K562 (cell line): ENCODE measurements at regions of chr10 and their contacts with region 1.

Region 1: GRCh38 chr10:59625721-59626522 is 83.7 kb downstream of the SLC16A9 start:
- DNase-seq: peak; percentile 63 to 78 (median 67)
- ATAC-seq: peak; percentile 91
- H3K4me3 ChIP-seq: no peak overlapping the region
- H3K27ac ChIP-seq: no peak overlapping the region
- H3K4me1 ChIP-seq: no peaks in the 10 kb centered on the region
- H3K27me3 ChIP-seq: no peaks in the 10 kb centered on the region; a peak in 1 of 5 replicates
- CTCF ChIP-seq: peak; percentile 84 to 98 (median 97)
- EP300 ChIP-seq: no peak
- POLR2A ChIP-seq: no peak
- RAD21 ChIP-seq: peak; percentile 97 to 99

Region 2: DNA sequence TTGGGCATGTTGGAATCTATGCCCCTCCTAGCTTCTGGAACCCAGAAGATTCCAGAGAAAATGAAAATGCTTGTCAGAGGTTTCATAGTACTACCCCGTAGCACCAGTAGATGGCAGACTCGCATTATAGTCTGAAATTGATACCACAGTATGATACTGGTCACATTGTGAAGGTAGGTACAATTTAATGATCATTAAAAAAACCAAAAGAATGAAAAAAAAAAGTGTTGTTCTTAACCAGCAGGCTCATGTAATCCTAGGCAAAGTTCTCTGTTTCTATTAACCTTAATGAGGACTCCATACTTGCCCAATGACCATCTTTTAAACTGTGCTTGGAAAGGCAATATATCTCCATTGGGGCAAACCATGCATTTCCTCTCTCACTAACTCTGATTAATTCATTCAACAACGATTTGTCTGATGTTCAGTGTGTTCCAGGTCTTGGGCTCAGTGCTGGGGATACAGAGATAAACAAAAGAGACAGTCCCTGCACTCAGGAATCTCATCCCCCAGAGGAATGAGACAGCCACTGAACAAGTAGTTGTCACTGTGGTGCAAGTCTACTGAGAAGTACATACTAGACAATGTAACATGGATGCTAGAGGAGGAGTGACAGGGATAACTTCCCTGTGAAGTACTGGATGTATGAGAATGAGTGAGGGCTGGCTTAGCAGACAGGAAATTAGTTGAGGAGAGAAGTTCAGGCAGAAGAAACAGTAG is 673.0 kb before region 1 on chr10:
- CTCF ChIA-PET with region 1: interaction called, 5 read pairs
- POLR2A ChIA-PET with region 1: interaction called, 3 read pairs
- in situ Hi-C with region 1: no loop called
- intact Hi-C with region 1: loop called (anchors 2 kb)
- DNase-seq: peak; percentile 23 to 46 (median 39)
- ATAC-seq: peak; percentile 69; the same call in 2 of the 3 replicates
- H3K4me3 ChIP-seq: no peak overlapping the region
- H3K27ac ChIP-seq: no peak overlapping the region
- H3K4me1 ChIP-seq: no peaks in the 10 kb centered on the region
- H3K27me3 ChIP-seq: no peaks in the 10 kb centered on the region
- CTCF ChIP-seq: peak; percentile 33 to 66 (median 63); a peak in 5 of 6 replicates
- EP300 ChIP-seq: no peak
- POLR2A ChIP-seq: no peak
- RAD21 ChIP-seq: peak; percentile 54 to 74

Region 3: GRCh38 chr10:59648711-59649201 is 22.8 kb after region 1 on chr10:
- CTCF ChIA-PET with region 1: no interaction called
- POLR2A ChIA-PET with region 1: no interaction called
- in situ Hi-C with region 1: no loop called
- intact Hi-C with region 1: no loop called
- DNase-seq: no peak
- ATAC-seq: no peak
- H3K4me3 ChIP-seq: no peak overlapping the region
- H3K27ac ChIP-seq: no peak overlapping the region
- H3K4me1 ChIP-seq: no peaks in the 10 kb centered on the region
- H3K27me3 ChIP-seq: no peaks in the 10 kb centered on the region
- CTCF ChIP-seq: no peak
- EP300 ChIP-seq: no peak
- POLR2A ChIP-seq: no peak
- RAD21 ChIP-seq: no peak

Region 4: DNA sequence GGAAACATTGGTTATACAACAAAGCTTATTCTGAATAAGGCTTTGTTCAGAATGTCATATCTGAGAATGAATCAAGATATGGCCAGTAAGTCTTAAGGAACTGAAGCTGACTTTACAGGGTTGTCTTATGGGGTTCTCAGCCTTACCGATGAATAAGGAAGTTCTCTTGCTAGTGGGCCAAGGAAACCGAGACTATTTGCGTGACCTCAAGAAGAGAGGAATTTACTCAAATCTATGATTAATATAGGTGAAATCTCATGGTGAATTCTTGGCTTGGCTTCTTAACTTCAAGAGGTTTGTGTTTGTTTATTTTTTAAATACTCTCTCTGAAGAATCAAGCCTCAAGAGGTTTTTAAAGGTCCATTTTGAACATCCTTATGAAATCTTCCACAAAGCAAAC is 132.0 kb after region 1 on chr10:
- CTCF ChIA-PET with region 1: no interaction called
- POLR2A ChIA-PET with region 1: no interaction called
- in situ Hi-C with region 1: no loop called
- intact Hi-C with region 1: loop called (anchors 2 kb)
- DNase-seq: no peak
- ATAC-seq: no peak
- H3K4me3 ChIP-seq: no peak overlapping the region
- H3K27ac ChIP-seq: no peak overlapping the region
- H3K4me1 ChIP-seq: no peaks in the 10 kb centered on the region
- H3K27me3 ChIP-seq: no peaks in the 10 kb centered on the region; a peak in 1 of 5 replicates
- CTCF ChIP-seq: no peak
- EP300 ChIP-seq: no peak
- POLR2A ChIP-seq: no peak
- RAD21 ChIP-seq: no peak

Region 5: GRCh38 chr10:59906417-59907202 is 280.7 kb after region 1 on chr10 and contains the start of gene CCDC6:
- CTCF ChIA-PET with region 1: interaction called, 3 read pairs
- POLR2A ChIA-PET with region 1: no interaction called
- in situ Hi-C with region 1: no loop called
- intact Hi-C with region 1: loop called (anchors 2 kb)
- DNase-seq: peak; percentile 86 to 93 (median 88)
- ATAC-seq: peak; percentile 91
- H3K4me3 ChIP-seq: peak within 1 kb of the TSS; percentile 86
- H3K27ac ChIP-seq: peak within 1 kb of the TSS; percentile 80
- H3K4me1 ChIP-seq: peaks cover 19 to 34% of the 10 kb centered on the region in 2 experiments
- H3K27me3 ChIP-seq: no peaks in the 10 kb centered on the region
- CTCF ChIP-seq: peak; percentile 59 to 89 (median 84)
- EP300 ChIP-seq: 0 out of 2 replicates have a peak, but pooled peaks have one; percentile 3
- POLR2A ChIP-seq: peak; percentile 84
- RAD21 ChIP-seq: peak; percentile 44 to 71; a peak in 3 of 4 replicates
- polyA plus RNA-seq, gene CCDC6: 10.4 to 12.7 TPM

Region 6: GRCh38 chr10:60208676-60209269 is 582.9 kb after region 1 on chr10:
- CTCF ChIA-PET with region 1: interaction called, 4 read pairs
- POLR2A ChIA-PET with region 1: no interaction called
- in situ Hi-C with region 1: loop called (anchors 10 kb)
- intact Hi-C with region 1: loop called (anchors 1 kb)
- DNase-seq: peak; percentile 22 to 60 (median 28)
- ATAC-seq: peak; percentile 69
- H3K4me3 ChIP-seq: no peak overlapping the region
- H3K27ac ChIP-seq: no peak overlapping the region
- H3K4me1 ChIP-seq: no peaks in the 10 kb centered on the region
- H3K27me3 ChIP-seq: no peaks in the 10 kb centered on the region
- CTCF ChIP-seq: peak; percentile 69 to 92 (median 85)
- EP300 ChIP-seq: no peak
- POLR2A ChIP-seq: no peak
- RAD21 ChIP-seq: peak; percentile 96 to 99